ENCODE measurements at regions of chr4 and their contacts with region 1.

Region 1: DNA sequence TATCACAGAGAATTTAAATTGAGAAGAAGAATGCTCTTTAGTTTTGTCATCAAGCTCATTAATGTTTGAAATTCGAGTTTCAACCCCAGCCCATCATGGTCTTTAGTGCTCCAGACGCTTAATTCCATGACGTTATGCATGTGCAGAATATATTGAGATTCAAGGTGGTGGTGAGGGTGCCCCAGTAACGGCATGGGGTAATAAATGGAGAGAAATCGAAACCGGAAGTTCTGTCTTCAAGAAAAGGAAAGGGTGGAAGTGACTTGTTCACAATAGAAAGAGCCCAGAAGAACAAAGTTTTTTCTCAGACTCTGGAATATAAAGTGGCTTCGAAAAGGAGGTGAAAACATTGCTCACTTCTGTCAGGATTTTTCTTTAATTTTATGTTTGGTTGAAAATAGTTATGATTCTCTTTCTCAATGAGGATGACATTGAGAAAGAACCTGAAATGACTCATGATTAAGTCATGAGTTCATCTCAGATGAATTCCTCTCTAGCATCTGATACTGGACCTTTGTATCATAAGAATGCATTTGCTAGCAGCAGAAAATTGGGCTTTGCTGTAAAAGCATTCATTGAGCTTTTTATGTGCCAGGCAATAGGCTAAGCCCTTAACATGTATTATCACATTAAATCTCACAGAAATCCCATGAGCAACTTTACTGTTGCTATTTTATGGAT is 779 bp upstream of the DDX60L start:
- DNase-seq: peak; percentile 81
- H3K4me3 Mint-ChIP-seq: peak overlapping the region; percentile 96
- H3K27ac Mint-ChIP-seq: peak overlapping the region; percentile 95
- H3K4me1 Mint-ChIP-seq: peaks cover 26% of the 10 kb centered on the region
- H3K27me3 Mint-ChIP-seq: no peaks in the 10 kb centered on the region
- CTCF ChIP-seq: no peak

Region 2: DNA sequence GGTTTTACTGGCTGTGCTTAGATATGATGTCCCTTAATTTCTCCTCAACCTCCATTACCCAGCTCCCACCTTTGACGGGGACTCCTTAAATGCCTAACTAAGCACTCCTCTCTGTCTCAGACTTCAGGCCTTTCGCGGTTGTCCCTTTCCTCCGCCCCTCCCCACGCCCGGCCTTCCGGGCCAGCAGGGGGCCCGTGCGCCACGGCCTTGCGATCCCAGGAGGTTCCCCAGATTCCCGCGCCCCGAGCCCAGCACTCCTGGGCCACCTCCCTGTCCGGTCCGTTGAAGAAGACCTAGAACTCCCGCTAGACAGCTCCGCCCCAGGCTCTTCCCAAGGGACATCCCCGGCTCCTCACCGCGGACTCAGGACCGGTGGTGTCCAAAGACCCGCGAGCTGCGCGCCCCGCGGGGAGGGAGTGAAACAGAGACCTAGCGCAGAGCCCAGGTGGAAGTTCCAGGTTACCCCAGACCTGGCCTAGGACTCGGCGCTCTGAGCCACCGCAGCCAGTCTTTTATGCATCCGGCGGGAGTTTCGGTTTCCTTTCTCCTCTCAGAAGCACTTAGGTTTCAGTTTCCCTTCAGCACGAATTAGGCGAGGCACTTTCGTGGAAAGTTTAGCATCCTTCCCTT is 162.7 kb before region 1 on chr4 and contains the start of gene DDX60:
- CTCF ChIA-PET with region 1: no interaction called
- POLR2A ChIA-PET with region 1: interaction called, 14 read pairs
- intact Hi-C with region 1: loop called (anchors 1 kb)
- DNase-seq: peak; percentile 87
- H3K4me3 Mint-ChIP-seq: peak within 1 kb of the TSS; percentile 95
- H3K27ac Mint-ChIP-seq: peak within 1 kb of the TSS; percentile 97
- H3K4me1 Mint-ChIP-seq: peaks cover 24% of the 10 kb centered on the region
- H3K27me3 Mint-ChIP-seq: no peaks in the 10 kb centered on the region
- CTCF ChIP-seq: peak; percentile 30
- total RNA-seq, gene DDX60: 4.7 and 7.9 TPM in 2 replicates

Region 3: GRCh38 chr4:168451744-168452390 is 29.2 kb before region 1 on chr4:
- CTCF ChIA-PET with region 1: no interaction called
- POLR2A ChIA-PET with region 1: interaction called, 12 read pairs
- intact Hi-C with region 1: no loop called
- DNase-seq: peak; percentile 86
- H3K4me3 Mint-ChIP-seq: no peak overlapping the region
- H3K27ac Mint-ChIP-seq: peak overlapping the region; percentile 14
- H3K4me1 Mint-ChIP-seq: peaks cover 12% of the 10 kb centered on the region
- H3K27me3 Mint-ChIP-seq: no peaks in the 10 kb centered on the region
- CTCF ChIP-seq: no peak

Region 4: GRCh38 chr4:168701061-168701460 is 220.0 kb after region 1 on chr4:
- CTCF ChIA-PET with region 1: no interaction called
- POLR2A ChIA-PET with region 1: no interaction called
- intact Hi-C with region 1: no loop called
- DNase-seq: no peak
- H3K4me3 Mint-ChIP-seq: no peak overlapping the region
- H3K27ac Mint-ChIP-seq: no peak overlapping the region
- H3K4me1 Mint-ChIP-seq: peaks cover 6% of the 10 kb centered on the region
- H3K27me3 Mint-ChIP-seq: no peaks in the 10 kb centered on the region
- CTCF ChIP-seq: no peak

Measured in MCF 10A (cell line).